ENCODE measurements at regions of chr17 and their contacts with region 1.

Region 1: GRCh38 chr17:30116661-30117551 is at the start of gene NSRP1:
- DNase-seq: peak; percentile 82 to 93 (median 90)
- ATAC-seq: peak; percentile 99
- H3K4me3 ChIP-seq: peak within 1 kb of the TSS; percentile 96
- H3K4me3 Mint-ChIP-seq: peak within 1 kb of the TSS; percentile 91 to 100 (median 98)
- H3K27ac ChIP-seq: peak within 1 kb of the TSS; percentile 97
- H3K27ac Mint-ChIP-seq: peak within 1 kb of the TSS; percentile 97 to 100 (median 100)
- H3K4me1 ChIP-seq: peaks cover 3 to 10% of the 10 kb centered on the region in 2 donors
- H3K4me1 Mint-ChIP-seq: peaks cover 20 to 57% (median 48%) of the 10 kb centered on the region in 7 donors
- H3K27me3 ChIP-seq: no peaks in the 10 kb centered on the region
- H3K27me3 Mint-ChIP-seq: no peaks in the 10 kb centered on the region
- total RNA-seq, gene NSRP1: 25.6 to 34.7 (median 29.3) TPM

Region 2: GRCh38 chr17:29389982-29390850 is 726.7 kb before region 1 on chr17 and contains the start of gene TAOK1:
- CTCF ChIA-PET with region 1: no interaction called
- POLR2A ChIA-PET with region 1: no interaction called
- intact Hi-C with region 1: loop called in 1 of 2 experiments (anchors 2 kb)
- DNase-seq: peak; percentile 93 to 98 (median 96)
- ATAC-seq: peak; percentile 97
- H3K4me3 ChIP-seq: peak within 1 kb of the TSS; percentile 94
- H3K4me3 Mint-ChIP-seq: peak within 1 kb of the TSS; percentile 95 to 99 (median 98)
- H3K27ac ChIP-seq: peak within 1 kb of the TSS; percentile 98
- H3K27ac Mint-ChIP-seq: peak within 1 kb of the TSS; percentile 92 to 98 (median 97)
- H3K4me1 ChIP-seq: peaks cover 14 to 25% of the 10 kb centered on the region in 2 donors
- H3K4me1 Mint-ChIP-seq: peaks cover 36 to 49% (median 44%) of the 10 kb centered on the region in 7 donors
- H3K27me3 ChIP-seq: no peaks in the 10 kb centered on the region
- H3K27me3 Mint-ChIP-seq: peaks cover 0 to 2% (median 0%) of the 10 kb centered on the region in 5 donors
- total RNA-seq, gene TAOK1: 62.4 to 70.1 (median 66.5) TPM

Region 3: GRCh38 chr17:30104575-30105339 is 12.1 kb before region 1 on chr17:
- CTCF ChIA-PET with region 1: interaction called, 20 read pairs
- POLR2A ChIA-PET with region 1: interaction called, 5 read pairs
- intact Hi-C with region 1: no loop called
- DNase-seq: peak; percentile 35 to 67 (median 58)
- ATAC-seq: peak; percentile 98
- H3K4me3 ChIP-seq: peak overlapping the region; percentile 40
- H3K4me3 Mint-ChIP-seq: peak overlapping the region; percentile 74 to 91 (median 84)
- H3K27ac ChIP-seq: no peak overlapping the region
- H3K27ac Mint-ChIP-seq: peak overlapping the region in 5 of 9 donors; percentile 16 to 73 (median 34)
- H3K4me1 ChIP-seq: peaks cover 0 to 7% of the 10 kb centered on the region in 2 donors
- H3K4me1 Mint-ChIP-seq: peaks cover 5 to 7% (median 6%) of the 10 kb centered on the region in 7 donors
- H3K27me3 ChIP-seq: no peaks in the 10 kb centered on the region
- H3K27me3 Mint-ChIP-seq: peaks cover 0 to 29% (median 5%) of the 10 kb centered on the region in 5 donors

Region 4: GRCh38 chr17:30134551-30134950 is 17.6 kb after region 1 on chr17:
- CTCF ChIA-PET with region 1: no interaction called
- POLR2A ChIA-PET with region 1: no interaction called
- intact Hi-C with region 1: no loop called
- DNase-seq: no peak
- ATAC-seq: no peak
- H3K4me3 ChIP-seq: no peak overlapping the region
- H3K4me3 Mint-ChIP-seq: no peak overlapping the region
- H3K27ac ChIP-seq: no peak overlapping the region
- H3K27ac Mint-ChIP-seq: no peak overlapping the region
- H3K4me1 ChIP-seq: no peaks in the 10 kb centered on the region
- H3K4me1 Mint-ChIP-seq: peaks cover 6 to 46% (median 36%) of the 10 kb centered on the region in 7 donors
- H3K27me3 ChIP-seq: no peaks in the 10 kb centered on the region
- H3K27me3 Mint-ChIP-seq: no peaks in the 10 kb centered on the region

Region 5: GRCh38 chr17:30291543-30292285 is 174.8 kb after region 1 on chr17 and contains the start of gene BLMH:
- CTCF ChIA-PET with region 1: interaction called, 3 read pairs
- POLR2A ChIA-PET with region 1: interaction called, 4 read pairs
- intact Hi-C with region 1: loop called (anchors 2 to 5 kb)
- DNase-seq: peak; percentile 58 to 89 (median 66)
- ATAC-seq: peak; percentile 90
- H3K4me3 ChIP-seq: peak within 1 kb of the TSS; percentile 77
- H3K4me3 Mint-ChIP-seq: peak within 1 kb of the TSS in 8 of 10 donors; percentile 92 to 97 (median 94)
- H3K27ac ChIP-seq: peak within 1 kb of the TSS; percentile 63
- H3K27ac Mint-ChIP-seq: peak within 1 kb of the TSS; percentile 44 to 91 (median 85)
- H3K4me1 ChIP-seq: peaks cover 9% of the 10 kb centered on the region in 2 donors
- H3K4me1 Mint-ChIP-seq: peaks cover 5 to 22% (median 19%) of the 10 kb centered on the region in 7 donors
- H3K27me3 ChIP-seq: no peaks in the 10 kb centered on the region
- H3K27me3 Mint-ChIP-seq: no peaks in the 10 kb centered on the region
- total RNA-seq, gene BLMH: 26.8 to 57.5 (median 40.1) TPM

Region 6: GRCh38 chr17:30378824-30379302 is 262.0 kb after region 1 on chr17 and contains the start of gene CPD:
- CTCF ChIA-PET with region 1: no interaction called
- POLR2A ChIA-PET with region 1: no interaction called
- intact Hi-C with region 1: loop called (anchors 1 kb)
- DNase-seq: peak; percentile 93 to 99 (median 97)
- ATAC-seq: peak; percentile 98
- H3K4me3 ChIP-seq: peak within 1 kb of the TSS; percentile 76
- H3K4me3 Mint-ChIP-seq: peak within 1 kb of the TSS; percentile 90 to 99 (median 94)
- H3K27ac ChIP-seq: peak within 1 kb of the TSS; percentile 81
- H3K27ac Mint-ChIP-seq: peak within 1 kb of the TSS; percentile 89 to 98 (median 94)
- H3K4me1 ChIP-seq: peaks cover 20 to 50% of the 10 kb centered on the region in 2 donors
- H3K4me1 Mint-ChIP-seq: peaks cover 36 to 65% (median 55%) of the 10 kb centered on the region in 7 donors
- H3K27me3 ChIP-seq: no peaks in the 10 kb centered on the region
- H3K27me3 Mint-ChIP-seq: no peaks in the 10 kb centered on the region
- total RNA-seq, gene CPD: 16.5 to 52.9 (median 22.6) TPM

Region 7: GRCh38 chr17:30906101-30906911 is 789.4 kb after region 1 on chr17 and contains the start of gene TEFM:
- CTCF ChIA-PET with region 1: no interaction called
- POLR2A ChIA-PET with region 1: no interaction called
- intact Hi-C with region 1: loop called in 1 of 2 experiments (anchors 5 kb)
- DNase-seq: peak; percentile 71 to 86 (median 80)
- ATAC-seq: peak; percentile 98
- H3K4me3 ChIP-seq: peak within 1 kb of the TSS; percentile 96
- H3K4me3 Mint-ChIP-seq: peak within 1 kb of the TSS; percentile 88 to 99 (median 92)
- H3K27ac ChIP-seq: peak within 1 kb of the TSS; percentile 88
- H3K27ac Mint-ChIP-seq: peak within 1 kb of the TSS; percentile 77 to 99 (median 92)
- H3K4me1 ChIP-seq: peaks cover 9 to 13% of the 10 kb centered on the region in 2 donors
- H3K4me1 Mint-ChIP-seq: peaks cover 33 to 65% (median 56%) of the 10 kb centered on the region in 7 donors
- H3K27me3 ChIP-seq: no peaks in the 10 kb centered on the region
- H3K27me3 Mint-ChIP-seq: no peaks in the 10 kb centered on the region
- total RNA-seq, gene TEFM: 8.5 to 22.1 (median 16.5) TPM

Region 8: GRCh38 chr17:31858642-31859473 is 1742.0 kb after region 1 on chr17 and contains the start of gene COPRS:
- CTCF ChIA-PET with region 1: no interaction called
- POLR2A ChIA-PET with region 1: no interaction called
- intact Hi-C with region 1: loop called in 1 of 2 experiments (anchors 10 kb)
- DNase-seq: peak; percentile 46 to 83 (median 74)
- ATAC-seq: peak; percentile 97
- H3K4me3 ChIP-seq: peak within 1 kb of the TSS; percentile 60
- H3K4me3 Mint-ChIP-seq: peak within 1 kb of the TSS; percentile 79 to 93 (median 86)
- H3K27ac ChIP-seq: peak within 1 kb of the TSS; percentile 51
- H3K27ac Mint-ChIP-seq: peak within 1 kb of the TSS; percentile 3 to 87 (median 75)
- H3K4me1 ChIP-seq: peaks cover 0 to 7% of the 10 kb centered on the region in 2 donors
- H3K4me1 Mint-ChIP-seq: peaks cover 11 to 19% (median 15%) of the 10 kb centered on the region in 7 donors
- H3K27me3 ChIP-seq: no peaks in the 10 kb centered on the region
- H3K27me3 Mint-ChIP-seq: no peaks in the 10 kb centered on the region
- total RNA-seq, gene COPRS: 2.2 to 20.9 (median 4.2) TPM

Measured in naive thymus-derived CD4-positive, alpha-beta T cell (primary cell).